K562 (cell line): ENCODE measurements at regions of chr19 and their contacts with region 1.

Region 1: DNA sequence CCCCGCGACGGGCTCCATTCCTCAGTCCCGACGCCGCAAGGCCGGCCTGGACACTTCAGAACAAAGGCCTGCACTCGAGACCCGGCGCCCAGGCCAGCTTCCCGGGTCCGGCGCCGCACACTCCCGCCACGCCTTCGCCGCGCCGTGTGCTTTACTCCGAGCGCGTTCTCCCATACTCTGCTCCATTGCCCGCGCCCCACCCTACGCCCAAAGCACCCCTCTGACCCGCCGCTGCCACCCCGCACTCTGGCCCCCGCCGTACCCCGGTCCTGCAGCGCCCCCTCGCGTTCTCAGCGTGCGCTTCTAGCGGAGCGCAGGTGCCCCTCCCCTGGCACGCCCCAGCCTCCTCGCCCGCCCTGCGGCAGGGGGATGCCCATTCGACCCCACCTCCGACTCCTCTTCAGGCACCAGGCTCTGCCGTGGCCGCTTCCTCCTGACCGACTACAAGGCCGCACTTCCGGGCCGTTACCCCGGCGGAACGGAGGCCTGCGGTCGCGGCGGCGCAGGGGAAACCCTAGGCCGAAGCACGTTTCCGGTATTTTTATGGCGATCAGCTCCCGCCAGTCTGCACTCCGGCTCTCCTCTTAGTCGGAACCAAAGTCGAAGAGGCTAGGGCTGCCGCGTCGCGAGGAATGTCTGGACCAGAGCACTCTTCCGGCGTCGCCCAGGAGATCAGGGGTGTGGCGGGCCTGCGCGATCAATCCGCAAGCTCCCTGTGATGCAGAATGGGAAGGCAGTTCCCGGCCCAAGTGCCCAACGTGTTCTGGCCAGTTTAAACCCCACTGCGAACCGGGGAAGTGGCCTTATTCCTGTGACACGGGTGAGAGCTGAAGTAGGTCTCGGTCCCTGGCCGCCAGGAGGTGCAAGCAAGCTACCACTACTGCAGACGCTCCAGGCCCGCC is at the start of gene ZBTB45:
- DNase-seq: peak; percentile 86 to 96 (median 92)
- ATAC-seq: peak; percentile 87
- H3K4me3 ChIP-seq: peak within 1 kb of the TSS; percentile 79
- H3K27ac ChIP-seq: peak within 1 kb of the TSS; percentile 92
- H3K4me1 ChIP-seq: peaks cover 9 to 49% of the 10 kb centered on the region in 2 experiments
- H3K27me3 ChIP-seq: no peaks in the 10 kb centered on the region
- CTCF ChIP-seq: peak; percentile 77 to 86 (median 82)
- EP300 ChIP-seq: peak; percentile 15; the same call in 1 of the 2 replicates
- POLR2A ChIP-seq: peak; percentile 83
- RAD21 ChIP-seq: peak; percentile 83 to 85
- polyA plus RNA-seq, gene ZBTB45: 0.08 to 0.13 TPM

Region 2: GRCh38 chr19:58218899-58219298 is 300.7 kb before region 1 on chr19:
- CTCF ChIA-PET with region 1: interaction called, 3 read pairs
- POLR2A ChIA-PET with region 1: no interaction called
- in situ Hi-C with region 1: no loop called
- intact Hi-C with region 1: loop called (anchors 1 kb)
- DNase-seq: peak in 3 of 4 experiments; percentile 31 to 62 (median 35)
- ATAC-seq: peak; percentile 88
- H3K4me3 ChIP-seq: no peak overlapping the region
- H3K27ac ChIP-seq: no peak overlapping the region
- H3K4me1 ChIP-seq: peaks cover 0 to 11% of the 10 kb centered on the region in 2 experiments; a peak in 1 of 5 replicates
- H3K27me3 ChIP-seq: no peaks in the 10 kb centered on the region
- CTCF ChIP-seq: peak; percentile 16 to 46 (median 32); a peak in 3 of 6 replicates
- EP300 ChIP-seq: no peak
- POLR2A ChIP-seq: no peak
- RAD21 ChIP-seq: peak in 1 of 2 experiments; percentile 34; a peak in 2 of 4 replicates

Region 3: GRCh38 chr19:58408152-58409009 is 111.2 kb before region 1 on chr19 and contains the start of gene ZNF584:
- CTCF ChIA-PET with region 1: interaction called, 3 read pairs
- POLR2A ChIA-PET with region 1: interaction called, 3 read pairs
- in situ Hi-C with region 1: no loop called
- intact Hi-C with region 1: loop called (anchors 1 kb)
- DNase-seq: peak; percentile 92 to 98 (median 95)
- ATAC-seq: peak; percentile 94
- H3K4me3 ChIP-seq: peak within 1 kb of the TSS; percentile 87
- H3K27ac ChIP-seq: peak within 1 kb of the TSS; percentile 97
- H3K4me1 ChIP-seq: peaks cover 18 to 39% of the 10 kb centered on the region in 2 experiments
- H3K27me3 ChIP-seq: no peaks in the 10 kb centered on the region
- CTCF ChIP-seq: peak in 1 of 3 experiments; percentile 32; a peak in 3 of 6 replicates
- EP300 ChIP-seq: peak; percentile 26; the same call in 1 of the 2 replicates
- POLR2A ChIP-seq: peak; percentile 96
- RAD21 ChIP-seq: peak in 1 of 2 experiments; percentile 21; a peak in 2 of 4 replicates
- polyA plus RNA-seq, gene ZNF584: 5.8 to 7.1 TPM

Region 4: DNA sequence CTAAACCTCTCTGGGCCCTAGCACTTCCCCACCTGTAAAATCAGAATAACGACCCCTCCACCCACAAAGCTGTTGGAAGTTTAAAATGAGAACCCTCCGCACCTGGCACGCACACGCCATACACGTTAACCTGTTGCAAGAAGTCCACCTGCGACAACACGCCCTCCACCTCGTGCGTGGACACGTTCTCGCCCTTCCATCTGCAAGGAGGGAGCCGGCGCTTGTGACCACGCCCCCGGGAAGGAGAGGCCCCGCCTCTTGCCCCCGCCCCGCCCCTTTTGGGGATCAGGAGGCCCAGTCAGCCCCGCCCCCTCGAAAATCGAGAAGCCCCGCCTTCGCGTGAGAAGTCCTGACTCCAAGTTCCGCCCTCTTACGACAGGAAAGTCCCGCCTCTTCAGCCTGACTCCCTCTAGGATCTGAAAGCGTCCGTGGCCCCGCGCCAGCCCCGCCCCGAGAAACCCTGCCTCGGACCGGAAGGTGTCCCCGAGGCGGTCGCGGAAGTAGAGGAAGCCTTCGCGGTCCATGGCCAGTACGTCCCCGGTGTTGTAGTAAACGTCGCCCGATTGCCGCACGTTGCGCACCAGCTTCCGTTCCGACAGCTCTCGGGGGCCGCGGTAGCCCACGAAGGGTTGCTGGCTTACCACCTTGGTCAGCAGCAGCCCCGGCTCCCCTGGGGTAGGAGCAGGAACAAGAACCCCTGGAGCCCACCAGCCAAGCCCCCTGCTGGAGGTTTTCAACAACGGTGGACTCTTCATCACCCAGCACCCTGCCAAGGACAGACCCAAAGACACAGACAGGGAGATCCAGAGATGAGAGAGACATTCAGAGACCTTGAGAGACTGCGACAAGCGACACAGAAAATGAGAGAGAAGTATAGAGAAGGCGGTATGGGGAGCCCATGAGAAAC is 20.3 kb before region 1 on chr19:
- CTCF ChIA-PET with region 1: no interaction called
- POLR2A ChIA-PET with region 1: interaction called, 14 read pairs
- in situ Hi-C with region 1: no loop called
- intact Hi-C with region 1: no loop called
- DNase-seq: peak; percentile 99 to 100 (median 99)
- ATAC-seq: peak; percentile 98
- H3K4me3 ChIP-seq: peak overlapping the region; percentile 67
- H3K27ac ChIP-seq: peak overlapping the region; percentile 84
- H3K4me1 ChIP-seq: peaks cover 22 to 32% of the 10 kb centered on the region in 2 experiments; a peak in 4 of 5 replicates
- H3K27me3 ChIP-seq: no peaks in the 10 kb centered on the region
- CTCF ChIP-seq: peak in 1 of 3 experiments; percentile 42; a peak in 3 of 6 replicates
- EP300 ChIP-seq: peak; percentile 59
- POLR2A ChIP-seq: peak; percentile 83
- RAD21 ChIP-seq: peak in 1 of 2 experiments; percentile 28; a peak in 1 of 4 replicates

Region 5: DNA sequence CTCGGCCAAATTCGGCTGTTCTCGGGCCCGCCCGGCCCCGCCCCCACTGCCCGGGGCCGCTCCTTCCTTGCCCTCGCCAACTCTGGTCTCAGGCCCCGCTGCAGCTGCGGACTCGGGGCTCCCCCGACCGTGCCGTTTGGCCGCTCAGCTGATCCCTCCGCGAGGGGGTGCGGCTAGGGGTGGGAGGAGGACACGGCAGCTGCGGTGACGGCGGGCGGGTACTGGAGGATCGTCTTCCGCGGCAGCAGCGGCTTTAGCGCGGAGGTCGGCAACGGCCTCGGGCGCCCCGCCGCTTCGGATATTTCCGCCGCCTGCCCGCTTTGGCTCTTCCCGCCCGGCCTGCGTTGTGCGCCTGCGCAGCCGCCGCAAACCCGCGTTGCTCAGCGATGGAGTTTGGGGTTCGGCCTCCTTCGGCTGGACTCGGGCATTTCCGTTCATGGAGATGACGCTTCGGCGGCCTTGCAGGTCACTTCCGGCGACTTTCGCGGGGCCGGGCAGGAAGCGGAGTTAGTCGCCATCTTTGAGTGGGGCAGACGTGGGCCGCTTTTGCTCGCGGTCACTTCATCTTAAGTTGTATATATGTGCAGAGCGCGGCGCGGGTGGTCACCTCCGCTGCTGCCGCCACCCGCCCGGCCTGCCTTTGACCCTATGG is 39.1 kb after region 1 on chr19:
- CTCF ChIA-PET with region 1: no interaction called
- POLR2A ChIA-PET with region 1: interaction called, 11 read pairs
- in situ Hi-C with region 1: no loop called
- intact Hi-C with region 1: no loop called
- DNase-seq: peak; percentile 80 to 99 (median 86)
- ATAC-seq: peak; percentile 79
- H3K4me3 ChIP-seq: peak overlapping the region; percentile 92
- H3K27ac ChIP-seq: peak overlapping the region; percentile 94
- H3K4me1 ChIP-seq: peaks cover 33 to 74% of the 10 kb centered on the region in 2 experiments
- H3K27me3 ChIP-seq: no peaks in the 10 kb centered on the region
- CTCF ChIP-seq: no peak
- EP300 ChIP-seq: no peak
- POLR2A ChIP-seq: no peak
- RAD21 ChIP-seq: no peak

Region 6: GRCh38 chr19:58581227-58582151 is 61.9 kb after region 1 on chr19:
- CTCF ChIA-PET with region 1: interaction called, 23 read pairs
- POLR2A ChIA-PET with region 1: interaction called, 5 read pairs
- in situ Hi-C with region 1: no loop called
- intact Hi-C with region 1: no loop called
- DNase-seq: peak; percentile 78 to 97 (median 81)
- ATAC-seq: peak; percentile 96
- H3K4me3 ChIP-seq: no peak overlapping the region
- H3K27ac ChIP-seq: peak overlapping the region; percentile 78
- H3K4me1 ChIP-seq: peaks cover 49 to 52% of the 10 kb centered on the region in 2 experiments
- H3K27me3 ChIP-seq: no peaks in the 10 kb centered on the region; a peak in 1 of 5 replicates
- CTCF ChIP-seq: peak; percentile 100
- EP300 ChIP-seq: 0 out of 2 replicates have a peak, but pooled peaks have one; percentile 13
- POLR2A ChIP-seq: no peak
- RAD21 ChIP-seq: peak; percentile 99